RWPE1 (cell line): ENCODE measurements at regions of chr6 and their contacts with region 1.

Region 1: GRCh38 chr6:42239351-42240055 is 21.8 kb upstream of the MRPS10 start:
- DNase-seq: peak; percentile 72
- H3K27ac ChIP-seq: peak overlapping the region; percentile 98
- CTCF ChIP-seq: no peak

Region 2: DNA sequence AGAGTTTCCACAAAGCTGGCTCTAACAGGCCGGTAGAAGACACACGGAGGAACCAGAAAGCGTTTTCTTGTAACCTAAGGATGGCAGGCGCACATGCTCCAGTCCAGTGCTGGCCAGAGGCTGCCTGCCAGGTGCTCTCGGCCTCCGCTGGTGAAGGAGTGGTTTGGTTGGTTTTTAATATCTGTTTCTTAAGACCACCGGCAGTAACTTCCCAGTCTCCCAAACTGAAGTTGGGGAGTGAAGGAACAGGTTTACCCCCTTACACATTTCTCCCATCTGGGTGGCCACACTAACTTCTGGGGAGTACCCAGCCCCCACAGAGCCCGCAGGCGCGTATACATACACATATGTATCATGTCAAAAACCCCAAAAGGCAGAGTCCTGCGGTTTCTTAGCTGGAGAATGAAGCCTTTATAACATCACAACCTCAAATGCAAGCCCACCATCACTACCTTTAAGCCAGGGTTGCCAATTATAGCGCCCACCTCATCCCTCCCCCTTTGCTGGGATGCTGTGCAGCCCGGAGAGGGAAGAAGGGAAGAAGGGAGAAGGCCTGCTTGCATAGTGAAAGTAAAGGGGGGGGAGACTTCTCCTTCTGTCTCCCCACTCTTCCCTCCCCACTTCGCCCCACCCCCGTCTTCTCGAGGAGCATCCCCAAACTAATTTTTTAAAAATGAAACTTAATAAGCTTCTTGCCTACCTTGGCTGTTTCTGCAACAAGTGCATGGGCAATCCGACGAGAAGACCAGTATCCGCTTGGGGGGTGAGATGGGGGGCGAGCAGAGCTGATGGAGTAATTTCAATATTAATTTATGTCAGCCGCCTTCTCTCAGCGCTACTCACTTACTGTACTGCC is 211.2 kb after region 1 on chr6:
- CTCF ChIA-PET with region 1: no interaction called
- POLR2A ChIA-PET with region 1: interaction called, 10 read pairs
- DNase-seq: peak; percentile 30
- H3K27ac ChIP-seq: peak overlapping the region; percentile 98
- CTCF ChIP-seq: no peak